KBM-7 (cell line): ENCODE measurements at regions of chr13 and their contacts with region 1.

Region 1: DNA sequence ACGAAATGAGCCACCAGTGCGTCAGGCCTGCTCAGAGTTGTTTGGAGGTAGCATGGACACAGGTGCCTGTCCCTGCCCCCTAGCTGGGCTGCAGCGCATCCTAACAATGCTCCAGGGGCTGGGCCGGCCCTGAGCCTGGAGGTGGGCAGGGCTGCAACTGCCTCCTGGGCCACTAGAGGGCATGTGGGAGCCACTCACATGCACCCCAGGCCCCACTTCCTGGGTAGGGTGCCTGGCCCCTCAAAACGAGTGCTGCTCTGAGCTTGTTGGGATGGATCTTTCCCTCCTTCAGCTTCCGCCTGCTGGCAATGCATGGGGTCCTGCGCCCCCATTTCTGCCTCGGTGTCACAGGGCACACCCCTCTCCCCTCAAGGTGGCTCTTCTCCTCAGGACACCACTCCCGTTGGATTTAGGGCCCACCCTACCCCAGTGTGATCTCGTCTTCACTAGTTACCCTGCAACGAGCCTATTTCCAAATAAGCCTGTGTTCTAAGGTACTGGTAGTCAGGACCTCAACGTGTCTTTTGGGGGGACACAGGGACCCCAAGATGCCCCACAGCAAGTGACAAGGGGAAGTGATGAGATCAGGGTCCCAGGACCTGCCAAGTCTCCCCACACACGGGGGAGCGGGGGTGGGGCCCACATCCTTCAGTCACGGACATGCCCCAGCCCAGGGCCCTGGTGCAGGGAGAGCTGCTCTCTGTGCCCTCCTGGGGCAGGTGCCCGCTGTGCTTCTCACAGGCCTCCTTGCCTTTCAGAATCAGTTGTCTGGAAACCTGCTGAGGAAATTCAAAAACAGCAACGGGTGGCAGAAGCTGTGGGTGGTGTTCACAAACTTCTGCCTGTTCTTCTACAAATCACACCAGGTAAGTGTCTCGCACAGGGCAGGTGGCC is 131.3 kb downstream of the STK24 start:
- DNase-seq: peak; percentile 71

Region 2: GRCh38 chr13:97855570-97856303 is 589.9 kb before region 1 on chr13:
- in situ Hi-C with region 1: loop called (anchors 25 kb)
- DNase-seq: peak; percentile 67

Region 3: GRCh38 chr13:98364647-98365046 is 80.9 kb before region 1 on chr13:
- in situ Hi-C with region 1: no loop called
- DNase-seq: no peak